ENCODE measurements at regions of chr5 and their contacts with region 1.

Region 1: GRCh38 chr5:79612667-79613198 is 492 bp downstream of the TENT2 start:
- DNase-seq: peak in 1 of 10 donors; percentile 32

Region 2: GRCh38 chr5:78972654-78973428 is 639.9 kb before region 1 on chr5:
- intact Hi-C with region 1: no loop called
- DNase-seq: peak in 5 of 10 donors; percentile 16 to 86 (median 31)

Region 3: GRCh38 chr5:79143684-79144379 is 468.9 kb before region 1 on chr5:
- intact Hi-C with region 1: no loop called
- DNase-seq: no peak

Region 4: GRCh38 chr5:79552984-79553383 is 59.7 kb before region 1 on chr5:
- intact Hi-C with region 1: no loop called
- DNase-seq: no peak

Region 5: GRCh38 chr5:79990598-79991507 is 378.1 kb after region 1 on chr5 and contains the start of gene MTX3:
- intact Hi-C with region 1: loop called (anchors 5 kb)
- DNase-seq: peak; percentile 80 to 97 (median 88)